ENCODE measurements at regions of chr17 and their contacts with region 1.

Region 1: GRCh38 chr17:14300575-14301278 is at the start of gene HS3ST3B1:
- DNase-seq: peak; percentile 93 to 100 (median 99)
- ATAC-seq: peak; percentile 90
- H3K4me3 ChIP-seq: peak within 1 kb of the TSS; percentile 99
- H3K4me3 Mint-ChIP-seq: peak within 1 kb of the TSS; percentile 85 to 100 (median 96)
- H3K27ac ChIP-seq: peak within 1 kb of the TSS; percentile 63
- H3K27ac Mint-ChIP-seq: peak within 1 kb of the TSS; percentile 86 to 94 (median 90)
- H3K4me1 ChIP-seq: peaks cover 39 to 44% of the 10 kb centered on the region in 2 donors
- H3K4me1 Mint-ChIP-seq: peaks cover 49 to 69% (median 62%) of the 10 kb centered on the region in 7 donors
- H3K27me3 ChIP-seq: peaks cover 10 to 22% of the 10 kb centered on the region in 2 donors
- H3K27me3 Mint-ChIP-seq: peaks cover 29 to 39% (median 37%) of the 10 kb centered on the region in 5 donors
- total RNA-seq, gene HS3ST3B1: 11.7 to 40.7 (median 30.8) TPM

Region 2: DNA sequence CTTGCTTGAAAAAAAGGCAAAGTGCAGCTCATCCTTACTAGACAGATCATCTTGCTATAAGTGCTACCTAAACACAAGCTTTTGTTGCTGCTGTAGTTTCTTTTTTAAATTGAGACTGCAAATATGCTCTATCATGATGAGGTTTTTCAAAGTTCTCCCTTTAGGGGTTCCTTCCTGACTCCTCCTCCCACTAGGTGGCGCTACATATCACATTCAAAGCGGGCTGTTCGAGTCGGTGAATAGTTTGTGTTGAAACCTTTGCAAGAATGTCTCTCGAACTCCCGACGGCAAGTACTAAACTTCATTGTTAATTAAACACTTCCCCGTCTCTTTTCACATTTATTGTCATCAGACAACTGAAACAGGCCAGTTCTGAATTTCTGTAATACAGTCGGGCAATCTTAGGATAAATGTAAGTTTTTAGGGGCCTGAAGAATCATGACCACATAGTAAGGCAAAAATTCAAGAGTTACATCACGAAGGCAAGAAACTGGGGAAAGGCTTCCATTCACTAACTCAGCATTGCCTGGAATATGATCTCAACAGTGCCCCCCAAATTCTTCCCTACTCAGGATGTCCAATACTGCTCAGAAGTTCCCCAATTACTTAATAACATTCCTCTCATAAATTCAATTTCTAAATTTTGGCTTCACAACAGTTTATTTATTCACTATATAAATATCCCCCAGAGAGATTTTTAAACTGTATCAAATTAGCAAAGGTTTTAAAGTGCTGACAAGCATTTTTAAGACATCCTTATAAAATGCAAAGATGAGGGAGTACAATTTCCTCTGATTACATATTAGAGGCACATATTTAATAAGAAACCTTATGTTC is 705.7 kb before region 1 on chr17:
- CTCF ChIA-PET with region 1: interaction called, 14 read pairs
- POLR2A ChIA-PET with region 1: interaction called, 3 read pairs
- intact Hi-C with region 1: loop called (anchors 1 kb)
- DNase-seq: peak; percentile 44 to 85 (median 80)
- ATAC-seq: peak; percentile 91
- H3K4me3 ChIP-seq: no peak overlapping the region
- H3K4me3 Mint-ChIP-seq: no peak overlapping the region
- H3K27ac ChIP-seq: no peak overlapping the region
- H3K27ac Mint-ChIP-seq: peak overlapping the region in 1 of 9 donors; percentile 3
- H3K4me1 ChIP-seq: no peaks in the 10 kb centered on the region
- H3K4me1 Mint-ChIP-seq: peaks cover 1 to 8% (median 7%) of the 10 kb centered on the region in 7 donors
- H3K27me3 ChIP-seq: no peaks in the 10 kb centered on the region
- H3K27me3 Mint-ChIP-seq: peaks cover 29 to 39% (median 36%) of the 10 kb centered on the region in 5 donors

Region 3: DNA sequence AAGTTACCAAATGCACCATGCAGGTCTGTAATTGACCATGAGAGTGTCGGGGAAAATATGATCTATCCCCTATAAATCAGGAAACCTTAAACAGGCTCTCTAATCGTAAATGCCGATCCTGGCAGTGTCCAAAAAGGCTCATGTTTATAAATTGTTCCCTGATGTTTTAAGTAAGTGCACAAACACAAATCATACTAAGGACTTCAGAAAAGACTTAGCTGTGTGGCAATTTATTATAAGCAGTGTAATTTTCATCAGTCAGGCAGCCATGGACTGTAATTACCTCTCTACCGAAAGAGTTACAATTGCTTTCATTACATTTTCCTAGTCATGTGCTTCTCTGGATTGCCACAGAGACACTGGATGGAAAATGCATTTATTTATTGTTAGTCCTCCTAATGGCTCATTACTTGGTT is 304.9 kb before region 1 on chr17:
- CTCF ChIA-PET with region 1: no interaction called
- POLR2A ChIA-PET with region 1: no interaction called
- intact Hi-C with region 1: loop called in 1 of 2 experiments (anchors 1 kb)
- DNase-seq: no peak
- ATAC-seq: no peak
- H3K4me3 ChIP-seq: no peak overlapping the region
- H3K4me3 Mint-ChIP-seq: no peak overlapping the region
- H3K27ac ChIP-seq: no peak overlapping the region
- H3K27ac Mint-ChIP-seq: no peak overlapping the region
- H3K4me1 ChIP-seq: no peaks in the 10 kb centered on the region
- H3K4me1 Mint-ChIP-seq: peaks cover 0 to 11% (median 0%) of the 10 kb centered on the region in 7 donors
- H3K27me3 ChIP-seq: no peaks in the 10 kb centered on the region
- H3K27me3 Mint-ChIP-seq: no peaks in the 10 kb centered on the region

Region 4: GRCh38 chr17:14203388-14203787 is 97.3 kb before region 1 on chr17:
- CTCF ChIA-PET with region 1: interaction called, 11 read pairs
- POLR2A ChIA-PET with region 1: interaction called, 69 read pairs
- intact Hi-C with region 1: loop called (anchors 1 kb)
- DNase-seq: peak in 7 of 9 donors; percentile 51 to 72 (median 64)
- ATAC-seq: peak; percentile 59
- H3K4me3 ChIP-seq: no peak overlapping the region
- H3K4me3 Mint-ChIP-seq: peak overlapping the region; percentile 18 to 72 (median 58)
- H3K27ac ChIP-seq: peak overlapping the region; percentile 45
- H3K27ac Mint-ChIP-seq: peak overlapping the region; percentile 86 to 96 (median 94)
- H3K4me1 ChIP-seq: peaks cover 80 to 81% of the 10 kb centered on the region in 2 donors
- H3K4me1 Mint-ChIP-seq: peaks cover 76 to 95% (median 84%) of the 10 kb centered on the region in 7 donors
- H3K27me3 ChIP-seq: no peaks in the 10 kb centered on the region
- H3K27me3 Mint-ChIP-seq: no peaks in the 10 kb centered on the region

Region 5: DNA sequence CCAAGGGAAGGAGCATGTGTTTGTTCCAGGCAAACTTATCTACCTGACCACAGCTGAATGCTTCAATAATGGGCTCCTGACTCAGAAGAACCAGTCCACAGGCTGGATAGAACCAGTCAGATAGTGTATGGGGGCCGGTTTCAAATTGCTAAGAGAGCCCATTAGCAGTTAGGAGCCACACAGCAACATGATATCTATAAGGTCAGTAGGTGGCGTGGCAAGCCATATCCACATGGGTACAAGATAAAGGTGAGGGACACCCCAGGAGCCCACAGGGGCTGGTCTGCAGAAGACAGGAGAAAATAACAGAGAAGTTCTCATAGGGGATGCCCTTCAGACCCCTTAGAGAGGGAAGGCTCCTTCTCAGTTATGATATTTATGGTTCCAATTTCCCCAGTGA is 32.5 kb before region 1 on chr17:
- CTCF ChIA-PET with region 1: no interaction called
- POLR2A ChIA-PET with region 1: no interaction called
- intact Hi-C with region 1: no loop called
- DNase-seq: peak in 1 of 9 donors; percentile 3
- ATAC-seq: no peak
- H3K4me3 ChIP-seq: no peak overlapping the region
- H3K4me3 Mint-ChIP-seq: no peak overlapping the region
- H3K27ac ChIP-seq: no peak overlapping the region
- H3K27ac Mint-ChIP-seq: no peak overlapping the region
- H3K4me1 ChIP-seq: no peaks in the 10 kb centered on the region
- H3K4me1 Mint-ChIP-seq: no peaks in the 10 kb centered on the region
- H3K27me3 ChIP-seq: no peaks in the 10 kb centered on the region
- H3K27me3 Mint-ChIP-seq: peaks cover 0 to 20% (median 0%) of the 10 kb centered on the region in 5 donors

Region 6: DNA sequence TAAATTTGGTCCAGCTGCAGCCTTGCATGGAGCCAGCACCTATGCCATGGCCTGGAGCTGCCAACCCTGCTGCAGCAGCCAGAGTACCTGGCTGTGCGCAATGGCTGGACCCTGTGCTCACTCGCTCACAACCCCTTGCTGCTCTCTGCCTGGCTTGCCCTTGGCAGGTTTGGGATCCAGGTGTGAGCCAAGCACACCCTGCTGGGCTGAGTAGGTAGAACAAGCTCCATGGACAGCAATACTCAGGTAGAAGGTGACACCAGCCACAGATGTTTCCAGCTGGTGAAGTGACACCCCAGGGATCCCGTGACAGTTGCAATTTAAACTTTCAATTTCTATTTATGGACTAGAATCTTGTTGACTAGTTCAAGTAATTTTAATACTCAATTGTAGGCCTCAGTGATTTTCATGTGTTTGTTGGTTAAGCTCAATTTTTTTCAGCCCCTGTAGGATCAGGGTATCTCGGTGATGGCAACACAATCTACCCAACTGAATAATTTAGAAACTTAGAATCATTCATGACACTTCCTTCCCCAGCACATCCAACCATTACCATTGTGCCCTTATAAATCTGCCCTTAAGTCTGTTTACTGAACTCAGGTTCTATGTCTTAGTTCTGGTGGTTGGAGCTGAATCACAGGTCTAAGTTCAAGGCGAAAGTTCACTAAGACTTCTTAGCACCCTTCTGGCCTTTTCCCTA is 484.4 kb after region 1 on chr17:
- CTCF ChIA-PET with region 1: interaction called, 8 read pairs
- POLR2A ChIA-PET with region 1: interaction called, 4 read pairs
- intact Hi-C with region 1: loop called in 1 of 2 experiments (anchors 1 kb)
- DNase-seq: peak in 8 of 9 donors; percentile 12 to 58 (median 40)
- ATAC-seq: peak; percentile 51
- H3K4me3 ChIP-seq: no peak overlapping the region
- H3K4me3 Mint-ChIP-seq: no peak overlapping the region
- H3K27ac ChIP-seq: no peak overlapping the region
- H3K27ac Mint-ChIP-seq: no peak overlapping the region
- H3K4me1 ChIP-seq: no peaks in the 10 kb centered on the region
- H3K4me1 Mint-ChIP-seq: no peaks in the 10 kb centered on the region
- H3K27me3 ChIP-seq: no peaks in the 10 kb centered on the region
- H3K27me3 Mint-ChIP-seq: peaks cover 0 to 18% (median 13%) of the 10 kb centered on the region in 5 donors